Right ventricle myocardium inferior (tissue), 1 donor: ENCODE measurements at regions of chr19 and their contacts with region 1.

Region 1: DNA sequence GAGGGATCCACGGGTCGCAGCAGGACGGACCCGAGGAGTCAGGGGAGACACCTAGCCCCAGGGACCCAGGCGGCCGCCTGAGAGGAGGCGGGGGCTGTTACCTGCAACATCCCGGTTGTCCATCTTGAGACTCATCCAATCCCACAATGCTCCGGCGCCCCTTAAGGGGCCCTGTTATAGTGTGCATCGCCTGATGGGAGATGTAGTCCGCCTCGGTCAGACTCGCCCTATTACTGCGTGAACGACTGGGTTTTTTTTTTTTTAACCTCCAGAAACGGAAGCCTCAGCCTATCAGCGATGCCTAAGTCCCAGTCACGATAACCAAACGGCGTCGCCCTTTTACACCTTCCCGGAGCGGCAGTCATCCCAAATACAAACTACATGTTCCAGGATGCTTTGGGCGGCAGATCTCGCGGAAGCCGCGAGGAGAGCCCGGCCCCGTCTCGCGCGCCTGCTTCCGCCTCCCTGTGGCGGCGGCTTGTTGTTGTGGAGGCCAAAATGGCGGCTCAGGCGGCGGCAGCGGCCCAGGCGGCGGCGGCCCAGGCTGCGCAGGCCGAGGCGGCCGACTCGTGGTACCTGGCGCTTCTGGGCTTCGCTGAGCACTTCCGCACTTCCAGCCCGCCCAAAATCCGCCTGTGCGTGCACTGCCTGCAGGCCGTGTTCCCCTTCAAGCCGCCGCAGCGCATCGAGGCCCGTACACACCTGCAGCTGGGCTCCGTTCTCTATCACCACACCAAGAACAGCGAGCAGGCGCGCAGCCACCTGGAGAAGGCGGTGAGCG is at the starts of genes MAU2 and SUGP1:
- DNase-seq: peak; percentile 95
- ATAC-seq: peak; percentile 95
- total RNA-seq, gene MAU2: 31.8 TPM
- total RNA-seq, gene SUGP1: 34.9 TPM

Region 2: DNA sequence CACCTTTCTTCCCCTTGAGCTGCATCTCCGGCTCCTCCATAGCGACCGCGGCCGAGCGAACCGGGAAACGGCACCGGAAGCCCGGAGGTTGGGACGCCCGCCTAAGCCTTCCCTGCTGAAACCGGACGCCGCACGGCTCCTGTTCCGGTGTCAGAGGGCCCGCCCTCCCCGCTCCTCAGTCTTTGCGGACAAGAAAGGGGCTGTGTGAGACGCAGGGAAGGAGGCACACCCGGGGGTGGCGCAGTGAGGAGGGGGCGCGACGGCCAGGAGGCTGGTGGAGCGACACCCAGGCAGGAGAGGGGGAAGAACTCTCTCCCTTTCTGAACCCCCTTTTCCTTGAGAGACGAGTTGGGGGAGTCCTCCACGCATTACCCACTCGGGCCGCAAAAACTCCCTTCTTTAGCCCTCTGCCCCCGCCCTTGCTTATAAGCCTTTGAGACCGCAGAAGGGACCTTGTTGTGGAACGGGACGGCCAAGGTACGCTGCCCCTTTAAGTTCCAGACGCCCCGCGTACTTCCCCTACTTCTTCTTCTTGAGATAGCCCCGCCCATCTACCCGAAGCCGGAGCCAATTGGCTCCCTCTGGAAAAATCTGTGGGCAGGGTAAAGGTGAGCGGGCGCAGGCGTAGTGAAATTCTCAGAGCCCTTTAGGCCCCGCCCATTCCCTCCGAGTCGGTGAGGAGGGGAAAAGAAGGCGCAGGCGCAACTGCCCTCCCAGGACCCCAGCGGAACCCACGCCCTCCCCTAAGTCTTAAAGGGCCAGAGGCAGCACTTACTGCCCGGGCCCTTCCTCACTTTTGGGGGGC is 128.3 kb before region 1 on chr19 and contains the starts of genes BORCS8 and RFXANK:
- intact Hi-C with region 1: loop called (anchors 10 kb)
- DNase-seq: peak; percentile 99
- ATAC-seq: peak; percentile 98
- total RNA-seq, gene BORCS8: 19.5 TPM
- total RNA-seq, gene RFXANK: 39.9 TPM

Region 3: DNA sequence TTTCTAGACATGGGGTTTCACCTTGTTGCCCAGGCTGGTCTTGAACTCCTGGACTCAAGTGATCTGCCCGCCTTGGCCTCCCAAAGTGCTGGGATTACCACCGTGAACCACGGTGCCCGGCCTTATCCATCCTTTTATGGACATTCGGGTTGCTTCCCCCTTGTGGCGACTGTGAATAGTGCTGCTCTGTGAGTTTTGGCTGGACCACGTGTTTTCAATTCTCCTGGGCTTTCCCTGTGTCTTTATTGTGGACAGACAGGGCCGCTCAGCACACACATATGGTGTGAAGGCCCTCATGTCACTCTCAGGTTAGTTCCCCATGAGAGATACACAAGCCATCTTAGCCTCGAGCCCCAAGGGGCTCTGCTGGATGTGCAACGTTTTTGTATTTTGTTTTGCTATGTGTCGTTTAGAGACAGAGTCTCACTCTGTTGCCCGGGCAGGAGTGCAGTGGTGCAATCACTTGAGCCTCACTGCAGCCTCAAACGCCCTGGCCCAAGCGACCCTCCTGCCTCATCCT is 40.6 kb after region 1 on chr19:
- intact Hi-C with region 1: no loop called
- DNase-seq: peak; percentile 70
- ATAC-seq: peak; percentile 75

Region 4: GRCh38 chr19:19385108-19385899 is 64.8 kb after region 1 on chr19:
- intact Hi-C with region 1: no loop called
- DNase-seq: peak; percentile 100
- ATAC-seq: peak; percentile 98

Region 5: DNA sequence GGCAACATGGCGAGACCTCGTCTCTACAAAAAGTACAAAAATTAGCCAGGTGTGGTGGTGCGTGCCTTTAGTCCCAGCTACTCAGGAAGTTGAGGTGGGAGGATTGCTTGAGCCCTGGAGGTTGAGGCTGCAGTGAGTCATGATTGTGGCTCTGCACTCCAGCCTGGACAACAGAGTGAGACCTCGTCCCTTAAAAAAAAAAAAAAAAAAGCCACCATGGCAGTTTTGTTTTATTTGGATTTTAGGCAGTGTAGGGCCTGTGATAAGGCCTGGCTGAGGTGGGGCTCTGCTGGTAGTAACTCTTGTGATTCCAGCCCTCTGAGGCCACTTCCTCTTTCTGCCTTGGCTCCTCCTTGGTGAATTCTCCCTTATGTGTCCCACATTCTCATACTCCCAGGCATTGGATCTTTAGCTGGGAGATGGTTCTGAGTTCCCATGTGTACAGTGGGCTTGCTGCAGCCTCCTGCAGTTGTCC is 124.2 kb after region 1 on chr19:
- intact Hi-C with region 1: no loop called
- DNase-seq: no peak
- ATAC-seq: peak; percentile 32